Activated naive CD4-positive, alpha-beta T cell treated with anti-CD3 and anti-CD28 coated beads for 36 hours (primary cell): ENCODE measurements at regions of chr4 and their contacts with region 1.

Region 1: GRCh38 chr4:122577808-122578781 is 42.8 kb downstream of the IL21 start:
- DNase-seq: peak; percentile 88
- H3K4me3 Mint-ChIP-seq: peak overlapping the region; percentile 65
- H3K27ac Mint-ChIP-seq: peak overlapping the region; percentile 99
- H3K4me1 Mint-ChIP-seq: peaks cover 76% of the 10 kb centered on the region
- H3K27me3 Mint-ChIP-seq: no peaks in the 10 kb centered on the region

Region 2: DNA sequence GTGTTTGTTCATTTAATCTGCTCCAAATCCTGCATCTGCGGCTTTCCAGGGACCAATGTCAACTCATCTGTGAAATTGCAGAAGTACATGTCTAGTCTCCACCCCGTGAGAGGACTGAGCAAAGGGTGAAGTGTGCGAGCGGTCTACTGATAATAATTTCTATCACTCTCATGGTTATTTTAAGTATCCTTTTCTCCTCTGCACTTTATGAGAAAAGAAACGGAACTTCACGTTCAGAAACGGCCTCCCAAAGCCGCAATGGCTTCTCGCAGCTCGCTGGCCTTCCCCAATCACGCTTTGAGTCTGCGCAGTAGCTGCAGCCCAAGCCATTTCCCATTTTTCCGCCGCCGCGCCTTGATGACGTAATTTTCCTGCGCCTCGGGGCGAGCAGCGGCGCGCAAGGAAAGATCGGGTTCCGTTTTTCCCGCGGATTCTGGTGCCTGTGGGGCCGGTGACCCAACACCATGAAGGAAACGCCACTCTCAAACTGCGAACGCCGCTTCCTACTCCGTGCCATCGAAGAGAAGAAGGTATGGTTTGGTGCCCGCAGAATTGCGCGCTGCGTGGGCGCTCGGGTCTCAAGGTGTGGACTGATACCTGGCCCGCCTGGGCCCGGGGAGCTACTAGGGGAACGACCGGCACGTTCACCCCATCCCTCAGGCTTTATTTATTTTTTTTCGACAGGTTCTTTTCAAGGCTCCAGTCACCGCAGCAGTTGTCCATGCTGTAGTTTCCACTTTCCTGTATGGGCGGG is 777.0 kb before region 1 on chr4 and contains the start of gene EXOSC9:
- CTCF ChIA-PET with region 1: no interaction called
- intact Hi-C with region 1: loop called (anchors 1 kb)
- DNase-seq: peak; percentile 95
- H3K4me3 Mint-ChIP-seq: peak within 1 kb of the TSS; percentile 89
- H3K27ac Mint-ChIP-seq: peak within 1 kb of the TSS; percentile 98
- H3K4me1 Mint-ChIP-seq: peaks cover 46% of the 10 kb centered on the region
- H3K27me3 Mint-ChIP-seq: no peaks in the 10 kb centered on the region
- total RNA-seq, gene EXOSC9: 57.7 to 58.7 TPM

Region 3: GRCh38 chr4:121998002-121998401 is 580.1 kb before region 1 on chr4:
- CTCF ChIA-PET with region 1: interaction called, 6 read pairs
- intact Hi-C with region 1: loop called (anchors 1 kb)
- DNase-seq: peak; percentile 21
- H3K4me3 Mint-ChIP-seq: no peak overlapping the region
- H3K27ac Mint-ChIP-seq: no peak overlapping the region
- H3K4me1 Mint-ChIP-seq: no peaks in the 10 kb centered on the region
- H3K27me3 Mint-ChIP-seq: peaks cover 18% of the 10 kb centered on the region

Region 4: DNA sequence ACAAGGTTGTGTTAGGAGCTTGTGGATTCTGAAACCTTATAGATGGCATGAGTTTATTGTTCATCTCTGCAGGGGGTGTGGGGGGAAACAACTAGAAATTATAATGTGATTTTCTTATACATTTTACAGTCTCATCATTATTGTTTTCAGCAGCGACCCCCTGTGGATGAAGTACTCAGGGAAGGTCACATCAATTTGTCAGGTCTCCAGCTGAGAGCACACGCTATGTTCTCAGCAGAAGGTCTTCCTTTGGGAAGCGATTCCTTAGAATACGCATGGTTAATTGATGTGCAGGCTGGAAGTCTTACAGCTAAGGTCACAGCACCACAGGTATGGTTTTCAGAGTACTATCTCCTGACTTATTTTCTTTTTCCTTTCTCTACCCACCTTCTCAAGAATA is 353.7 kb before region 1 on chr4:
- CTCF ChIA-PET with region 1: no interaction called
- intact Hi-C with region 1: loop called (anchors 2 kb)
- DNase-seq: peak; percentile 35
- H3K4me3 Mint-ChIP-seq: no peak overlapping the region
- H3K27ac Mint-ChIP-seq: no peak overlapping the region
- H3K4me1 Mint-ChIP-seq: no peaks in the 10 kb centered on the region
- H3K27me3 Mint-ChIP-seq: no peaks in the 10 kb centered on the region

Region 5: DNA sequence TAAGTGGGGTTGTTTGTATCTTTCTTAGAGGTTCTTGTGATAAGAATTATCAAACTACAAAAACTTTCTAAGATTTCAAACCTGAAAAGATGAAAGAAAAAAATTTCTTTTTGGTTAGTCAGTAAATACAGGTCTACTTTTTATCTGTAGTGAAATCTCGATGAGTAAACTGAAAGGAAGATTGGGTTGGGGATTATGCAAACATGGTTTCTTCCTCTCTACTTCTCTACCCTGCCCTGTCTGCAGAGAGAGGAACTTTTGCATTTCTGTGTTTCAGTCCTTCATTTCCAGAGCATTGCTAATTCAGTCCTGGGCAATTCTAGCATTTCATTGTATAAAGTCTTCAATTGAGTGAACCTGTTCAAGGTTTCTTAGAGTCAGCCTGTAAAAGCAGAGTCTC is 70.0 kb before region 1 on chr4:
- CTCF ChIA-PET with region 1: interaction called, 12 read pairs
- intact Hi-C with region 1: loop called (anchors 1 kb)
- DNase-seq: no peak
- H3K4me3 Mint-ChIP-seq: peak overlapping the region; percentile 53
- H3K27ac Mint-ChIP-seq: peak overlapping the region; percentile 98
- H3K4me1 Mint-ChIP-seq: peaks cover 89% of the 10 kb centered on the region
- H3K27me3 Mint-ChIP-seq: no peaks in the 10 kb centered on the region

Region 6: DNA sequence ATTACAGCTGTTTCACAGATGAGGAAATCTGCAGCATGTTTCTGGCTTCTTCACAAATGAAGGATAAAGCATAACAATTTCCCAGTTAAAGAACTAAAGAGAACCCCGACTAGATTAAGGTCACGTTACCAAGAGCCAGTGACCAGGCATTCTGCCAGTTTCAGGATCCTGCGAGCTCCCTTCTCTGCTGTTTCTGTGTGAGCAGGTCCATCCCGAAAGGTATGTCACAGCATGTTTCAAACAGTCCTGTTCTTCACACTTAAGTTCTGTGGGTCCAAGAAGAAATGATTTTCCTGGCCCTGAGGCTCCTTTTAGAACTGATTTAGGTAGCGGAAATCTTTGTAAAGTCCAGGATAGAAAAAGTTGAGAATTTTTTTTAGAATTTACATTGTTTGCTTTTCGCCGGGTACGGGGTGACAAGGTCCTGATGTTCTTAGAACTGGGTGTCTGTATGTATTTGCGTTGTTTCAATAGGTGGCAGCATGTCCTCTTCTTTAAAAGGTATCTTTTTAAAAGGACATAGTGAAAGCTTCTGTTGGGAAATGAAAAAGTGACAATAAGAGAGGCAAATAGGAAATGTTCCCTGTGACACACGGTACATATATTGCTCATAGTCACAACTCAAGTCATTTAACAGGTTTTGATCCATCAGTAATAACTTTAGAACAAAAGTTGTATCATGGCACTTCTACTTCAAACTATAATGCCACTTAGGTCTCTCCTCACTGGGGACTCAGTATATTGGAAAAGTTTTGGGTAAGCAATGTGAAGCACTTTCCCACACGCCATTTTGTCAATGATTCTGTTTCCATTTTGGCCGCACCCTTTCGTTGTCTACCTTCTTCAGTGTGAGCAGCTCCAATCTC is 24.4 kb after region 1 on chr4:
- CTCF ChIA-PET with region 1: interaction called, 29 read pairs
- intact Hi-C with region 1: no loop called
- DNase-seq: peak; percentile 44
- H3K4me3 Mint-ChIP-seq: peak overlapping the region; percentile 48
- H3K27ac Mint-ChIP-seq: peak overlapping the region; percentile 79
- H3K4me1 Mint-ChIP-seq: peaks cover 43% of the 10 kb centered on the region
- H3K27me3 Mint-ChIP-seq: no peaks in the 10 kb centered on the region

Region 7: GRCh38 chr4:122854447-122855352 is 276.6 kb after region 1 on chr4:
- CTCF ChIA-PET with region 1: no interaction called
- intact Hi-C with region 1: no loop called
- DNase-seq: no peak
- H3K4me3 Mint-ChIP-seq: no peak overlapping the region
- H3K27ac Mint-ChIP-seq: no peak overlapping the region
- H3K4me1 Mint-ChIP-seq: no peaks in the 10 kb centered on the region
- H3K27me3 Mint-ChIP-seq: peaks cover 6% of the 10 kb centered on the region

Region 8: DNA sequence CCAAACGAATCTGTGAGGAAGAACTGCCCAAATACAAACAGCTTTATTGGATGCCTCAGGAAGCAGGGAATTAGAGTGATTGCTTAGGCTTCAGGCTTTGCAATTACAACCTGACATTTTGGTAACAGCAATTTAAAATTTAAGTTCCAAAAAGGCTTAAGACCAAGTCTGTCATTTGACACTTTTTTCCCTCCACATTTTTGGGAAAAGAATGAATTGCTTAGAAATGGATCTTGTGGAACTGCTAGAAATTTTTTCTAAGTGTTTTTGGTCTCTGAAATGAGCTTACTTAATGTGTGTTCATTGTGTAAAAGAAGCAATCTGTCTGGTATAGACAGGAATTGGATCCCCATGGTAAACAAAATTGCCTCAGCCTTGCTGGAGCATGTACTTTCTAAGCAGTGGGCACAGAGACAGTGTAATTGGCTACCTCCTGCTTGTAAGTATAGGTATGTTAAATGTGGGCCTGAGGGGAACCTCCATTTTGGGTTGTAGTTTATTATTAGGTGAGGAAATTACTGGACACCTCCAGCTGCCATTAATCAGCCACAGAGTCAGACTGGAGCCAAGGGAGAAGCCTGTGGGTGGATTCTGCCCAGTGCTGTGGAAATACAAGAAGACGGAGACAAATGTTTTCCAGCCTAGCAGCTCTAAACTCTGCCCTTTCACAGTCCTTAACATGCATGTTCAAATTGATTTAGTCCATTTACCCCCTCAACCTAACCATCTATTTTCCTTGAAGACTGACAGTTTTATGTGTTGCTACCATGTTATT is 1291.4 kb after region 1 on chr4:
- CTCF ChIA-PET with region 1: no interaction called
- intact Hi-C with region 1: no loop called
- DNase-seq: no peak
- H3K4me3 Mint-ChIP-seq: no peak overlapping the region
- H3K27ac Mint-ChIP-seq: no peak overlapping the region
- H3K4me1 Mint-ChIP-seq: no peaks in the 10 kb centered on the region
- H3K27me3 Mint-ChIP-seq: no peaks in the 10 kb centered on the region